CD4-positive, alpha-beta T cell (primary cell): ENCODE measurements at regions of chr16 and their contacts with region 1.

Region 1: GRCh38 chr16:68396481-68396880 is 51.8 kb downstream of the SMPD3 start:
- DNase-seq: peak; percentile 40 to 79 (median 54)
- ATAC-seq: peak; percentile 67
- H3K4me3 ChIP-seq: no peak overlapping the region
- H3K4me3 Mint-ChIP-seq: no peak overlapping the region
- H3K27ac ChIP-seq: no peak overlapping the region
- H3K27ac Mint-ChIP-seq: no peak overlapping the region
- H3K4me1 ChIP-seq: peaks cover 32% of the 10 kb centered on the region
- H3K4me1 Mint-ChIP-seq: peaks cover 20% of the 10 kb centered on the region
- H3K27me3 ChIP-seq: no peaks in the 10 kb centered on the region
- H3K27me3 Mint-ChIP-seq: no peaks in the 10 kb centered on the region
- CTCF ChIP-seq: peak; percentile 83

Region 2: DNA sequence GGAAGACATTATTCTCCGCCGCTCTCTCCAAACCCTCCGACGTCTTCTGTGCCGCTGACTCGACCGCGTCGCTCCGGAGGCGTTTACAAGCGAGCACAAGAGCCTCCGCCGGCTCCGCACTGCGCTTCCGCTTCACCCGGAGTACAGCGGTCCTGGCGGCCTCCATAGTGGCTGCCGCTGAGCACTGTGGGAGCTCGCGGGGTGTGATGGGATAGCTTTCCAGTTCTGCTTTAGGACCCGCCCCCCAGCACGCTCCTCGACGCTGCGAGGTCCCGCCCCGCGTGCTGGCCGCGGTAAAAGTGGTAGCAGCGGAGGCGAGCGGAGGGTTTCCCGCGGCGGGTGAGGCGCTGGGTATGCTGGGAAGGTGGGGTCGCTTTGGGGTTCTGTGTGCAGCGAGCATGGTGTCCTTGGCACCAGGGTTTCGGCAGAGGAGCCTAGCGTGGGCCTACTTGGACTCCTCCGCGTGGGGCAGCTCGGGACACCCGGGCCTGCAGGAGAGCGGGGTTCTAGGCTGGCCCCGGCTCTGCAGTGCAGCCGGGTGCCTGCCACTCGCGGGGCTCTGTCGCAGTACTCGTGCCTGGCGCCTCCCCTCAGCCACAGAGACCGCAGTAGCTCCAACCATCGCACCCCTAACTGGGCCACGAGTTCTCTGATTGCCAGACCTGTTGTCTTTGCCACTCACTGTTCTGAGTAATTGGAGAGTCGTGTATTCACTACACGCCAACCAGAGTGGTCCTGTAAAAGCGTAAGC is 85.5 kb before region 1 on chr16 and contains the starts of genes PRMT7 and SLC7A6OS:
- CTCF ChIA-PET with region 1: no interaction called
- POLR2A ChIA-PET with region 1: no interaction called
- intact Hi-C with region 1: no loop called
- DNase-seq: peak; percentile 82 to 97 (median 90)
- ATAC-seq: peak; percentile 98
- H3K4me3 ChIP-seq: peak within 1 kb of the TSS; percentile 100
- H3K4me3 Mint-ChIP-seq: peak within 1 kb of the TSS; percentile 100
- H3K27ac ChIP-seq: peak within 1 kb of the TSS; percentile 73 to 79
- H3K27ac Mint-ChIP-seq: peak within 1 kb of the TSS; percentile 91
- H3K4me1 ChIP-seq: peaks cover 49% of the 10 kb centered on the region
- H3K4me1 Mint-ChIP-seq: peaks cover 62% of the 10 kb centered on the region
- H3K27me3 ChIP-seq: no peaks in the 10 kb centered on the region
- H3K27me3 Mint-ChIP-seq: no peaks in the 10 kb centered on the region
- CTCF ChIP-seq: peak; percentile 14
- total RNA-seq, gene PRMT7: 46.3 to 51.0 TPM
- total RNA-seq, gene SLC7A6OS: 29.0 to 32.1 TPM

Region 3: GRCh38 chr16:68382296-68382718 is 14.2 kb before region 1 on chr16:
- CTCF ChIA-PET with region 1: no interaction called
- POLR2A ChIA-PET with region 1: no interaction called
- intact Hi-C with region 1: no loop called
- DNase-seq: peak in 1 of 14 experiments; percentile 29
- ATAC-seq: no peak
- H3K4me3 ChIP-seq: no peak overlapping the region
- H3K4me3 Mint-ChIP-seq: no peak overlapping the region
- H3K27ac ChIP-seq: no peak overlapping the region
- H3K27ac Mint-ChIP-seq: no peak overlapping the region
- H3K4me1 ChIP-seq: peaks cover 27% of the 10 kb centered on the region
- H3K4me1 Mint-ChIP-seq: peaks cover 33% of the 10 kb centered on the region
- H3K27me3 ChIP-seq: no peaks in the 10 kb centered on the region
- H3K27me3 Mint-ChIP-seq: no peaks in the 10 kb centered on the region
- CTCF ChIP-seq: no peak

Region 4: GRCh38 chr16:68448360-68448970 is 52.0 kb after region 1 on chr16 and contains the start of gene SMPD3:
- CTCF ChIA-PET with region 1: interaction called, 5 read pairs
- POLR2A ChIA-PET with region 1: interaction called, 3 read pairs
- intact Hi-C with region 1: loop called (anchors 2 to 5 kb)
- DNase-seq: peak; percentile 95 to 99 (median 98)
- ATAC-seq: peak; percentile 98
- H3K4me3 ChIP-seq: peak within 1 kb of the TSS; percentile 58
- H3K4me3 Mint-ChIP-seq: peak within 1 kb of the TSS; percentile 77
- H3K27ac ChIP-seq: no peak within 1 kb of the TSS
- H3K27ac Mint-ChIP-seq: no peak within 1 kb of the TSS
- H3K4me1 ChIP-seq: peaks cover 44% of the 10 kb centered on the region
- H3K4me1 Mint-ChIP-seq: peaks cover 21% of the 10 kb centered on the region
- H3K27me3 ChIP-seq: peaks cover 26 to 31% of the 10 kb centered on the region in 2 experiments
- H3K27me3 Mint-ChIP-seq: peaks cover 29% of the 10 kb centered on the region
- CTCF ChIP-seq: no peak
- total RNA-seq, gene SMPD3: 0.89 to 1.1 TPM

Region 5: GRCh38 chr16:68512183-68512582 is 115.7 kb after region 1 on chr16:
- CTCF ChIA-PET with region 1: interaction called, 77 read pairs
- POLR2A ChIA-PET with region 1: interaction called, 15 read pairs
- intact Hi-C with region 1: loop called (anchors 1 kb)
- DNase-seq: no peak
- ATAC-seq: no peak
- H3K4me3 ChIP-seq: no peak overlapping the region
- H3K4me3 Mint-ChIP-seq: no peak overlapping the region
- H3K27ac ChIP-seq: no peak overlapping the region
- H3K27ac Mint-ChIP-seq: no peak overlapping the region
- H3K4me1 ChIP-seq: peaks cover 7% of the 10 kb centered on the region
- H3K4me1 Mint-ChIP-seq: no peaks in the 10 kb centered on the region
- H3K27me3 ChIP-seq: no peaks in the 10 kb centered on the region
- H3K27me3 Mint-ChIP-seq: no peaks in the 10 kb centered on the region
- CTCF ChIP-seq: no peak